Gastrocnemius medialis (tissue), 4 donors: ENCODE measurements at regions of chr6 and their contacts with region 1.

Region 1: GRCh38 chr6:142692942-142693341 is 252.0 kb downstream of the HIVEP2 start:
- DNase-seq: peak; percentile 34 to 52
- ATAC-seq: peak; percentile 63 to 79
- H3K4me3 ChIP-seq: no peak overlapping the region
- H3K27ac ChIP-seq: peak overlapping the region in 2 of 4 donors; percentile 3 to 15
- H3K4me1 ChIP-seq: peaks cover 11 to 12% of the 10 kb centered on the region in 2 donors
- H3K27me3 ChIP-seq: no peaks in the 10 kb centered on the region
- CTCF ChIP-seq: peak; percentile 91 to 95 (median 93)
- POLR2A ChIP-seq: no peak

Region 2: DNA sequence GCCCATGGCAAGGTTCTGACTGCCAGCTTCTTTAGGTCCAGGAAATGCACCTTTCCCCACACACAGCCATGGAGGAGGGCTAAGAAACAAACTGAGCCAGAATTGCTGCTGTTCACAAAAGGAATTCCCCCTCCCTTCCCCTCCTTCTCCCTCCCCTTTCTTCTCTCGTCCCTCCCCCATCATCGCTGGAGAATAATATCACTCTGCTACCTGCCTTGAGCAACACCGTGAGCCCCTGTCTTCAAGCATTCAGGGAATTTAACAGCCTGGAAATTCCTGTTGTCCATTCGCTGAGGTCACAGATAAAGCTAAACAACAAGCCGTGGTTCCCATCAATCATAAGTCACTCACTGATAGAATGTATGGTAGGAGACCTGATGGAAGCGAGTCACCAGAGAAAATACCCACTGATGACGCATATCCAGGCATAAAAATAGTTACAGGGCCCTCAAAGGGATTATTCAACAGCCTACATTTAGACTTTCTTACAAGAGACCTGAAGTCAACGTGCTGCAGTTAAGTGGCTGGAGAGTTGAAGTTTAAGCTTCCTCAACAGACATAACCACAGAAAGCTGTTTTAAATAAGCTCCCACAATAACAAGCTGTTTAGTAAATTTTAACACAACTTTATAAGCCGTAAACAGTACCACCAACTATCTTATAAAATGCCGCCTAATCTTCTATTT is 192.4 kb after region 1 on chr6:
- in situ Hi-C with region 1: no loop called
- intact Hi-C with region 1: loop called (anchors 10 kb)
- DNase-seq: peak; percentile 48 to 53
- ATAC-seq: peak; percentile 94 to 97
- H3K4me3 ChIP-seq: peak overlapping the region; percentile 38 to 54 (median 47)
- H3K27ac ChIP-seq: peak overlapping the region; percentile 81 to 93 (median 84)
- H3K4me1 ChIP-seq: peaks cover 61 to 71% of the 10 kb centered on the region in 2 donors
- H3K27me3 ChIP-seq: no peaks in the 10 kb centered on the region
- CTCF ChIP-seq: no peak
- POLR2A ChIP-seq: peak; percentile 55 to 80

Region 3: GRCh38 chr6:142952614-142953013 is 259.7 kb after region 1 on chr6:
- in situ Hi-C with region 1: loop called in 2 of 4 experiments (anchors 10 kb)
- intact Hi-C with region 1: no loop called
- DNase-seq: no peak
- ATAC-seq: no peak
- H3K4me3 ChIP-seq: no peak overlapping the region
- H3K27ac ChIP-seq: no peak overlapping the region
- H3K4me1 ChIP-seq: peaks cover 4 to 5% of the 10 kb centered on the region in 2 donors
- H3K27me3 ChIP-seq: no peaks in the 10 kb centered on the region
- CTCF ChIP-seq: no peak
- POLR2A ChIP-seq: no peak

Region 4: DNA sequence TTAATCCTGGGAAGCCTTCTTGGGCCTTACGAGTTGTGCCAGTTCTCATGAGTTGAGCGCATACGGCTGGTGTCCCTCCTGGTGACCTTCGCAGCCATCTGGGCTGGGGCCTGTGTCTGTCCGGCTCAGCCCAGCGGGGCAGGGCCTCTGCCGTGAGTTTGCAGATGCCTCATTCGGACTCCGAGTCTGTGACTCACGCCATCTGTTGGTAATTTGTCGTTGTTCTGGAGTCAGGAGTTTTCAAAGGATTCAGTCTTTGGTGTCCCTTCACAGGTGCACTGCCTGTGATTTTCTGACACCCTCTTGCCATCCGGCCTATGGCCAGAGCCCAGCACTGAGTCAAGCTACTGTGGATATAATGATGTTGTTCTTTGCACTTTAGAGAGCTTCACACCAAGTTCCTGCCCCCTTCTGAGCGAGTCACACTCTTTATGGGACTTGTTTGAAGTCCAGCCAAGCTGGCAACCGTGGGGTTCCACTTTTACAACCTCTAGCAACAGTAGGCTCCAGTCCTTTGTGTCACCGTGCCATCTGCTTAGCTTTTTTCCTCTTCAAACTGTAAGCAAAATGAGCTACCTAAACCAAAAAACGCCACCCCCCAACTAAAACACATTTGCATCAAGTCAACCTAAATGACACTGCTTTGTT is 543.3 kb after region 1 on chr6:
- in situ Hi-C with region 1: no loop called
- intact Hi-C with region 1: loop called (anchors 5 kb)
- DNase-seq: peak; percentile 52 to 78
- ATAC-seq: peak; percentile 96 to 97
- H3K4me3 ChIP-seq: no peak overlapping the region
- H3K27ac ChIP-seq: peak overlapping the region; percentile 49 to 75 (median 66)
- H3K4me1 ChIP-seq: peaks cover 4 to 19% of the 10 kb centered on the region in 2 donors
- H3K27me3 ChIP-seq: no peaks in the 10 kb centered on the region
- CTCF ChIP-seq: no peak
- POLR2A ChIP-seq: no peak

Region 5: DNA sequence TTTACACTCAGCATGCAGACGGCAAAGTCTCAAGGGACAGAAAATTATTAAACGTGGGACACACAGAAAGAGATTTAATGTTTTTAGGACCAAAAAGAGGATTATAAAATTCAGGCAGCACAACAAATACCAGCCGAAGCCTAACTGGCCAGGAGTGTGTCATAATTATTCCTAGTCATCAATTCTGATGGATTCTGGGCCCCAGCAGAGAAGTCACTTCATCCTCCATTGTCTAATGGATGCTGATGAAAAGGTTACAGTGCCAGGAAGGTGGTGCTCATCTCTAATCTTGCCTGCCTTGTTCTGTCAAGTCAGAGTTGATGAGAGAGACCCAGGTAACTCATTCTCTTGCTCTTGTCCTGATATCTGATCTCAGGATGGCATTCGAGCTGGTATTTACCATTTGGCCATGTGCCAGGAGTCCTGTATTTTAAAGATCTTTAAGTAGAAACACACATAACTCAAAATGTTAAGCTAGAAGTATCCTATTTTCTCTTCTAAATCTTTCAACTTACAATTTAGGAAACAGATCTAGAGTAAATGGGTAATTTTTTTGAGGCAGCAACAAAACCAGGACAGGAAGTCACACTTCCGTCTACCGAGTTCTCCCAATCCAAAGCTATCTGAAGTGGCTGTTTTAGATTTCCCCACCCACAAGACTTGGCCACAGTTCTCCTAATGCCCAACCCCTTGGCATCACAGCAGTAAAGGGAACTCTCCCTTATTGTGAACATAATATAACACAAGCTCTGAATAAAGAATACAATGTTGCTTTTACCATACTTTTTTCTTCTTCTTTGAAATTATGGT is 707.5 kb after region 1 on chr6:
- in situ Hi-C with region 1: loop called in 1 of 4 experiments (anchors 25 kb)
- intact Hi-C with region 1: no loop called
- DNase-seq: no peak
- ATAC-seq: no peak
- H3K4me3 ChIP-seq: no peak overlapping the region
- H3K27ac ChIP-seq: no peak overlapping the region
- H3K4me1 ChIP-seq: peaks cover 0 to 4% of the 10 kb centered on the region in 2 donors
- H3K27me3 ChIP-seq: peaks cover 0 to 7% (median 0%) of the 10 kb centered on the region in 3 donors
- CTCF ChIP-seq: no peak
- POLR2A ChIP-seq: no peak